IMR-90 (cell line): ENCODE measurements at regions of chr2 and their contacts with region 1.

Region 1: GRCh38 chr2:56183643-56184499 is at the start of gene CCDC85A:
- DNase-seq: peak; percentile 55
- ATAC-seq: peak; percentile 99
- H3K4me3 ChIP-seq: peak within 1 kb of the TSS; percentile 49
- H3K27ac ChIP-seq: no peak within 1 kb of the TSS
- H3K4me1 ChIP-seq: no peaks in the 10 kb centered on the region
- H3K27me3 ChIP-seq: peaks cover 41% of the 10 kb centered on the region
- CTCF ChIP-seq: peak; percentile 75
- POLR2A ChIP-seq: no peak
- RAD21 ChIP-seq: peak; percentile 75
- total RNA-seq, gene CCDC85A: 2.2 and 2.8 TPM in 2 replicates

Region 2: GRCh38 chr2:56209701-56210100 is 25.8 kb after region 1 on chr2:
- CTCF ChIA-PET with region 1: no interaction called
- POLR2A ChIA-PET with region 1: no interaction called
- dilution Hi-C with region 1: no loop called
- in situ Hi-C with region 1: no loop called
- intact Hi-C with region 1: no loop called
- DNase-seq: no peak
- ATAC-seq: no peak
- H3K4me3 ChIP-seq: no peak overlapping the region
- H3K27ac ChIP-seq: no peak overlapping the region
- H3K4me1 ChIP-seq: no peaks in the 10 kb centered on the region
- H3K27me3 ChIP-seq: no peaks in the 10 kb centered on the region
- CTCF ChIP-seq: no peak
- POLR2A ChIP-seq: no peak
- RAD21 ChIP-seq: no peak

Region 3: DNA sequence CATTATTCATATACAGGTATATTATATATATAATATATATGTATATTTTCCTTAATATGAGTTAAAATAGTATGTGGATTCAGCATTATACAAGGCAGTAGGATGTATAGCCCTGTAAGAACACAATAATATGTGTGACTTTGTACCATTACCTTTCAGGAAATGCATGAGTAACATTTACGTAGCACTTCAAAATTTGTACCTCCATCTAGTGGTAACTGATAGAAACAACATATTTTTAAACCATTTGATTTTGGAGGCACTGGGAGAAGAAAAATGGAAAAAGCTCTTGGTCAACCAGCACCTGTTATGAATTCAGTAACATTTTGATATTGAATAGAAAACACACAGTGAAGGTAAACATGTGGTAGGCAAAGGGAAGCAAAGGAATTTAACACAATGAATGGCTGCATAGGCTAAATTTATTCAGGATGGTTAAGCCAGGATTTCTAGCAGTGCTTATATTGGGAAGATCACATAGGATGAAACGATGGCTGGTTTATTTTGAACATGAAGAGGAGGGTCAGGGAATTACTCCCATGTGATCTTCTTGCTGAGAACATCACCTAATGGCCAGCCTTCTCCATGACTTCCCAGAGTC is 565.4 kb after region 1 on chr2:
- CTCF ChIA-PET with region 1: interaction called, 3 read pairs
- POLR2A ChIA-PET with region 1: no interaction called
- dilution Hi-C with region 1: no loop called
- in situ Hi-C with region 1: loop called (anchors 25 kb)
- intact Hi-C with region 1: loop called (anchors 1 kb)
- DNase-seq: peak; percentile 6
- ATAC-seq: no peak
- H3K4me3 ChIP-seq: no peak overlapping the region
- H3K27ac ChIP-seq: no peak overlapping the region
- H3K4me1 ChIP-seq: no peaks in the 10 kb centered on the region
- H3K27me3 ChIP-seq: no peaks in the 10 kb centered on the region
- CTCF ChIP-seq: peak; percentile 42
- POLR2A ChIP-seq: no peak
- RAD21 ChIP-seq: peak; percentile 53

Region 4: DNA sequence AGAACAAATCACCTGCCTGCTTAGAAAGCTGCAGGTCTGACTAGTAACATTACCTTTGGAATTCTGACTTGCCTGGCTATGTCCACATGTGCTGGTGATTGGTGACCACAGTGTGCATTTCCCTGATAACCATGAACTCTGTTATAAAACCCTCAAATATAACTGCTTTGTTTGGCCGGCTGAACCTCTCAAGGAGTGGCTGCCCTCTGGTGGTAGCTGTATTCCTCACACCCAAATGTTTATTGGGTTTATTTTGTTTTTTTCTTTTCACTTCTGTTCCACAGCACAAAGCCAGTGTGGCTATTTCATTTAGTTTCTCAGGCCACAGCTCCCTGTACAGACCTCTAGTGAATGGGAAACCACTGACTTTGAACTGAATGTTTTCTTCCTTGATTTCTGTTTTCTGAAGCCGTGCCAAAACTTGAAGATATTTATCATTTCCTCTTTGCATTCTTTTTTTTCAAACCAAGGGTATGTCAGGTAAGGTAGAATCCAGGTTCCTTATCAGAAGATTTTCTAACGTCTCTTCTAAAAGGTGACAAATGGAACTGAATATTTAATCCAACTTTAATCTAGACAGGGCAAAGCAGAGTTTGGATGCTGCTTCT is 1313.7 kb after region 1 on chr2:
- CTCF ChIA-PET with region 1: no interaction called
- POLR2A ChIA-PET with region 1: no interaction called
- dilution Hi-C with region 1: no loop called
- in situ Hi-C with region 1: loop called (anchors 10 kb)
- intact Hi-C with region 1: loop called (anchors 1 kb)
- DNase-seq: peak; percentile 32
- ATAC-seq: peak; percentile 81
- H3K4me3 ChIP-seq: no peak overlapping the region
- H3K27ac ChIP-seq: no peak overlapping the region
- H3K4me1 ChIP-seq: no peaks in the 10 kb centered on the region
- H3K27me3 ChIP-seq: no peaks in the 10 kb centered on the region
- CTCF ChIP-seq: peak; percentile 72
- POLR2A ChIP-seq: no peak
- RAD21 ChIP-seq: peak; percentile 66

Region 5: DNA sequence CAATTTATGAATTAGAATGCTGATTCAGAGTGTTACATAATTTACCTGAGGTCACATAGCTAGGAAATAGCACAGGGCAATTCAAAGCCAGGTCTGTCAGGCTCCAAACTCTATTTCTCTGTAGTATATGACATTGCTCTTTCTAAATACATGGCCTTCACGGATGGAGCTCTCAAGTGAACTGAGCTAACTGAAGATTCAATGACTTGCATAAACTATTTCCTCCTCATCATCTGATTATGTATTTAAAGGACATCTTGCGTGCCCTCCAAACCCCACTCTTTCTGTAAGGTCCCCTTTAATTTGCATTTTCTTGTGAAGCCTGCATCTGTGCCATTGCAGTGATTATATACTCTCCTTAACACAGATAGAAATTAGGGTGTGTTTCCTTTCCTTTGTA is 1325.3 kb after region 1 on chr2:
- CTCF ChIA-PET with region 1: interaction called, 6 read pairs
- POLR2A ChIA-PET with region 1: no interaction called
- dilution Hi-C with region 1: no loop called
- in situ Hi-C with region 1: loop called (anchors 10 kb)
- intact Hi-C with region 1: no loop called
- DNase-seq: no peak
- ATAC-seq: no peak
- H3K4me3 ChIP-seq: no peak overlapping the region
- H3K27ac ChIP-seq: no peak overlapping the region
- H3K4me1 ChIP-seq: no peaks in the 10 kb centered on the region
- H3K27me3 ChIP-seq: no peaks in the 10 kb centered on the region
- CTCF ChIP-seq: no peak
- POLR2A ChIP-seq: no peak
- RAD21 ChIP-seq: no peak

Region 6: DNA sequence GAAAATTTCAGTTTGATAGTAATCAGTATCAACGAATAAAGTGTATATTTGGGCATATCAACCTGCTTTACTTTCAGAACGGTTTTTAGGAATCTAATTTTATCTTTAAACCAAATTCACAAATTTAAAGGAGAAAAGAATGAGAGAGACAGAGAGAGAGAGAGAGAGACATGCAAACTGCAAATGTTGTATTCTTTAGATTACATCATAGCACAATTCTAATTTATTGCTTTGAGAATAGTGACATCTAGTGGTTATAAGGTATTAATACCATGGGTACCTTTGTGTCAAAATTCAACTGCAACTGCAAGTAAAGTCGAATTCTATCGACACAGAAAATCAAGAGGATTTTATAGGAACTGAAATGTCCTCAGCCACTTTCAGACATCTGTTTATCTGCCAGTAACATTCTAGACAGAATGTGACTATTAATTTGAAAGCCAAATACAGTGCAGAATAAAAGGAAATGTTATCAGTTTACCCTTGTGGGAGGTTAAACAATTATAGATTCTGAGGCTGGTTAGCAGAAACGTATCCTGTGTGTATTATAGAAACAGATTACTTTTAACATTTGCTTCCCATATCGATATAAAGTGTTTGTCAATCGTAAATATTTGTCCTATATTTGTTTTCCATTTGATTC is 1332.9 kb after region 1 on chr2:
- CTCF ChIA-PET with region 1: interaction called, 7 read pairs
- POLR2A ChIA-PET with region 1: no interaction called
- dilution Hi-C with region 1: no loop called
- in situ Hi-C with region 1: no loop called
- intact Hi-C with region 1: loop called (anchors 1 kb)
- DNase-seq: peak; percentile 47
- ATAC-seq: peak; percentile 53
- H3K4me3 ChIP-seq: no peak overlapping the region
- H3K27ac ChIP-seq: no peak overlapping the region
- H3K4me1 ChIP-seq: no peaks in the 10 kb centered on the region
- H3K27me3 ChIP-seq: no peaks in the 10 kb centered on the region
- CTCF ChIP-seq: peak; percentile 60
- POLR2A ChIP-seq: no peak
- RAD21 ChIP-seq: peak; percentile 67

Region 7: DNA sequence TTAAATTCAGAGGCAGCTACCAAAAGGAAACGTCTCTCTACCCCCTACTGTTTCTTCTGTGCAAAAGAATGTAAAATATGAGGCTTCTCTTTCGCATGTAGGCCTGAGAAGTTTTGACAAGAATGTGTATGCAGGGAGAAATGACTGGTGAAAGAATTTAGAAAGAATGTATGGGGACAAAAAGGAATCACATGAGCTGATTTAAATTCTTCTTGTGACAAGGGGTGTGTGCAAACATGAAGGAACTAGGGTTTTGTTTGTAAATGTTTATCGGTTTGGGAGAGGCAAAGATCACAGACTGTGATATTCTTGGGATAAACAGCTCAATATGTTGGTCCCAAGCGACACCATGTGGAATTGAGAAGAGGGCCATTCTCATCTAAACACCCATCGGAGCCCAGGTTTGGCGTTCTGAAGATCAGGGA is 1517.5 kb after region 1 on chr2:
- CTCF ChIA-PET with region 1: interaction called, 5 read pairs
- POLR2A ChIA-PET with region 1: no interaction called
- dilution Hi-C with region 1: no loop called
- in situ Hi-C with region 1: no loop called
- intact Hi-C with region 1: loop called (anchors 2 kb)
- DNase-seq: peak; percentile 0
- ATAC-seq: peak; percentile 75
- H3K4me3 ChIP-seq: no peak overlapping the region
- H3K27ac ChIP-seq: no peak overlapping the region
- H3K4me1 ChIP-seq: no peaks in the 10 kb centered on the region
- H3K27me3 ChIP-seq: no peaks in the 10 kb centered on the region
- CTCF ChIP-seq: no peak
- POLR2A ChIP-seq: no peak
- RAD21 ChIP-seq: no peak